Caco-2 (cell line): ENCODE measurements at regions of chr11 and their contacts with region 1.

Region 1: GRCh38 chr11:62905927-62906531 is 15.1 kb downstream of the CHRM1 start:
- DNase-seq: peak; percentile 84 to 88
- H3K4me3 ChIP-seq: no peak overlapping the region
- H3K4me3 Mint-ChIP-seq: no peak overlapping the region
- H3K27ac Mint-ChIP-seq: no peak overlapping the region
- H3K4me1 ChIP-seq: peaks cover 9% of the 10 kb centered on the region; the same call in 1 of the 2 replicates
- H3K4me1 Mint-ChIP-seq: peaks cover 5% of the 10 kb centered on the region
- H3K27me3 ChIP-seq: no peaks in the 10 kb centered on the region
- H3K27me3 Mint-ChIP-seq: no peaks in the 10 kb centered on the region
- CTCF ChIP-seq: peak; percentile 98 to 99

Region 2: DNA sequence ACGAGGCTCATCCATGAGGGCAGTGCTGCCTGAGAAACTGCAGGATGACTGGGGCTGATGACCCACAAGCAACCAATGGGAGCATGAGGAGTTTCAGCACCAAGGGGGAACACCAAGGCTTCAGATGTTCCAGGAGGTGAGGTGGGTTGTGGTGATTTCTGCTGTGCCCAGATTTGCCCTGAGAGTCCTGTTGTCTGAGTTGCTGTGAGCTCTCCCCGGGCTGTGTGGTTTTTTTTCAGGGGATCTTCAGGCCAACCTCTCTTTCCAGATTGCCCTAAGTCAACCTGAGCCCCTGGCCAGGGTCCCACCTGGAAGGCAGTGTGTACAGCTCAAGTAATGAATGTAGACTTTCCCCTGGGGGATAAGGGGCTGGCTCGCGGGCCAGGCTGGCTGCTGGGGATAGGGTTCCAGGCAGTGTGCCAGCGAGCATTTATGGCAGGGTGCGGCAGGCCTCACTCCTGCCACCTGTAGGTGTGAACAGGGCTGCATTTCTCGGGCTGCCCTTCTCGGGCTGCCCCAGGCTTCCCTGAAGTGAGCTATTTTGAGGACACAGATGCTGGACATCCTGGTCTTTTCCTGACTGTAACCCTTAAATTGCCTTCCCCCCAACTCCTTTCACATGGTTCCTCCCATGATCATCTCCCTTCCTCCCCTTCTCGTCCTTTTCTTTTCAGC is 69.0 kb after region 1 on chr11:
- CTCF ChIA-PET with region 1: interaction called, 32 read pairs
- POLR2A ChIA-PET with region 1: no interaction called
- intact Hi-C with region 1: loop called (anchors 1 kb)
- DNase-seq: peak in 1 of 2 experiments; percentile 49
- H3K4me3 ChIP-seq: no peak overlapping the region
- H3K4me3 Mint-ChIP-seq: no peak overlapping the region
- H3K27ac Mint-ChIP-seq: no peak overlapping the region
- H3K4me1 ChIP-seq: no peaks in the 10 kb centered on the region
- H3K4me1 Mint-ChIP-seq: no peaks in the 10 kb centered on the region
- H3K27me3 ChIP-seq: no peaks in the 10 kb centered on the region; the same call in 1 of the 2 replicates
- H3K27me3 Mint-ChIP-seq: no peaks in the 10 kb centered on the region
- CTCF ChIP-seq: peak; percentile 44 to 65